ENCODE measurements at regions of chr17 and their contacts with region 1.

Region 1: GRCh38 chr17:34146440-34147043 is 108.5 kb upstream of the CCL2 start:
- DNase-seq: peak in 1 of 2 experiments; percentile 90
- H3K4me3 ChIP-seq: no peak overlapping the region
- H3K27ac ChIP-seq: no peak overlapping the region
- H3K4me1 ChIP-seq: peaks cover 0 to 4% (median 0%) of the 10 kb centered on the region in 4 experiments; a peak in 3 of 7 replicates
- H3K27me3 ChIP-seq: no peaks in the 10 kb centered on the region
- CTCF ChIP-seq: peak; percentile 93 to 99 (median 97)
- EP300 ChIP-seq: no peak
- POLR2A ChIP-seq: no peak
- RAD21 ChIP-seq: peak; percentile 93 to 96

Region 2: GRCh38 chr17:33779225-33779591 is 367.3 kb before region 1 on chr17:
- CTCF ChIA-PET with region 1: interaction called, 42 read pairs
- POLR2A ChIA-PET with region 1: no interaction called
- DNase-seq: peak; percentile 3 to 70
- H3K4me3 ChIP-seq: no peak overlapping the region
- H3K27ac ChIP-seq: no peak overlapping the region
- H3K4me1 ChIP-seq: no peaks in the 10 kb centered on the region
- H3K27me3 ChIP-seq: no peaks in the 10 kb centered on the region
- CTCF ChIP-seq: peak; percentile 55 to 81 (median 76)
- EP300 ChIP-seq: no peak
- POLR2A ChIP-seq: no peak
- RAD21 ChIP-seq: peak; percentile 89 to 90

Region 3: DNA sequence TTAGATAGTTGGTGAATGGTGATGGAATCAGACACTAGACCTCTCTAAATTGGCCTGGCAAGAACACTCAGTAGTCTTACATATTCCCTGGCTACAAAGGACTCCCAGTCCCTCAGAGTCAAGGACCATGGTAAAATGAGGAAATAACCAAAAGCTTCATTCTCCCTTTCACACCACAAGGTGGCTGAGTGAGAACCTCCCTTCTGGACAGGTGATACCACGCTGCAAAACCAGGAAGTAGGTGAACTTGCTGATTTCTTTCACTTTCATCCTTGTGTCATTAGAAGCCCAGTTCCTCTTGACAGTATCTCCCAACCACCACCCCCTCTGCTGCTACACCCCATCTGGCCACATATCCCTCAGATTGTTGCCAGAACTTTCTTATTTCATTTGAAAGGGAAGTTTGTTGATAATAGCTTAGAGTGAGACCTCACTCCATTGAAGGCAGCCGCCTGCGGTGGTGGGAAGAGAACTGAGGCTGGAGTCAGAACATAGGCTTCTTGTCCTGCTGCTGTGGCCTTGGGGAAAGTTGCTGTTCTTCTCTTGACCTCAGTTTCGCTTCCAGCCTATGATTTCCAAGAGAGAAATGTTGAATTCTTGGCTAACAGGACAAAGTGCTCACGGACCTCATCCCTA is 182.1 kb before region 1 on chr17:
- CTCF ChIA-PET with region 1: interaction called, 31 read pairs
- POLR2A ChIA-PET with region 1: no interaction called
- DNase-seq: no peak
- H3K4me3 ChIP-seq: no peak overlapping the region
- H3K27ac ChIP-seq: no peak overlapping the region
- H3K4me1 ChIP-seq: peaks cover 0 to 4% (median 1%) of the 10 kb centered on the region in 4 experiments; a peak in 2 of 7 replicates
- H3K27me3 ChIP-seq: no peaks in the 10 kb centered on the region
- CTCF ChIP-seq: peak in 2 of 3 experiments; percentile 49 to 61; a peak in 3 of 4 replicates
- EP300 ChIP-seq: no peak
- POLR2A ChIP-seq: no peak
- RAD21 ChIP-seq: peak; percentile 42 to 54; a peak in 3 of 4 replicates

Region 4: GRCh38 chr17:34099859-34100515 is 46.6 kb before region 1 on chr17:
- CTCF ChIA-PET with region 1: interaction called, 11 read pairs
- POLR2A ChIA-PET with region 1: no interaction called
- DNase-seq: no peak
- H3K4me3 ChIP-seq: no peak overlapping the region
- H3K27ac ChIP-seq: no peak overlapping the region
- H3K4me1 ChIP-seq: peaks cover 0 to 2% (median 0%) of the 10 kb centered on the region in 4 experiments; a peak in 1 of 7 replicates
- H3K27me3 ChIP-seq: no peaks in the 10 kb centered on the region
- CTCF ChIP-seq: no peak
- EP300 ChIP-seq: no peak
- POLR2A ChIP-seq: no peak
- RAD21 ChIP-seq: no peak

Region 5: DNA sequence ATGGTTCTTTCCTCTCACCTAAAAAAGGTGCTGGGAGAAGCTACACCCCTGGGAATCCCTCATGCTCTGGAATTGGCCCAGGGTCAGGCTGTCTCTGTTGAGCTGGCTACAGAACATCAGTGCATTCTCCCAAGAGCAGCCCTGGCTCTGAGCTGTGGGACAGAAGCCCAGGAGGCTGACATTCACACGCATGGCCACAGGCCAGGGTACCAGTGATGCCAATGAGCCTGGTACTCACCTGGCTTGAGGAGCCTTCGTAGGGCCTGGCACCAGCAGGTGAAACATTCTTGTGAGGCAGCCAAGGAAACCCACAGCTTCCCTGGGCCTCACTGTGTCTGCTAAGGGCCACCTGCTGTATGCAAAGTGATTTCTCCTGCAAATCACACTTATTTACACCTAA is 13.2 kb before region 1 on chr17:
- CTCF ChIA-PET with region 1: interaction called, 145 read pairs
- POLR2A ChIA-PET with region 1: interaction called, 3 read pairs
- DNase-seq: no peak
- H3K4me3 ChIP-seq: no peak overlapping the region
- H3K27ac ChIP-seq: no peak overlapping the region
- H3K4me1 ChIP-seq: peaks cover 2 to 15% (median 10%) of the 10 kb centered on the region in 4 experiments
- H3K27me3 ChIP-seq: no peaks in the 10 kb centered on the region
- CTCF ChIP-seq: no peak
- EP300 ChIP-seq: no peak
- POLR2A ChIP-seq: no peak
- RAD21 ChIP-seq: no peak

Region 6: DNA sequence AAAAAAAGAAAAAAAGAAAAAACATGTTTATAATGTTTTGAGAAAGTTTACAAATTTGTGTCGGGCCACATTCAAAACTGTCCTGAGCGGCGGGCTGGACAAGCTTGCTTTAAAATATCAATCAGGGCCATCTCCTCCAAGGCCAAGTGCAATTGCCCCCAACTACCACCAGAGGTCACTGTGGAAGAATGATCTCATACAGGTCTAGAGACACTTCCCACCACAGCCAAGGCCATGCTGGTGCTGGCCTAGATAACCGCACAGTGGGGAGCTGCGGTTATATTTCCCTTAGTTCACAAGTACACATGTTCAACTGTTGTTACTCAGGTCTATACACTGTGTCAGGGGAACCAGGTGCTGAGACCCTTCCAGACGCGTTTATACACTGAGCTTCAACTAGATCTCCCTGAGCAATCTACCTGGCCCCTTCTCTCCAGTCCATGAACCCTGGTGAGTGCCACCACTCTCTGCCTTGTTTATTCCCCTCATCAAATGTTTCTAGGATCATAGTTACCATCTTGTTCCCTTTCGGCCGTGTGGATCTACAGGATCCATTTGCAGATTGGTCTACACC is 24.8 kb after region 1 on chr17:
- CTCF ChIA-PET with region 1: interaction called, 78 read pairs
- POLR2A ChIA-PET with region 1: interaction called, 3 read pairs
- DNase-seq: peak in 1 of 2 experiments; percentile 82
- H3K4me3 ChIP-seq: no peak overlapping the region
- H3K27ac ChIP-seq: no peak overlapping the region
- H3K4me1 ChIP-seq: no peaks in the 10 kb centered on the region
- H3K27me3 ChIP-seq: no peaks in the 10 kb centered on the region
- CTCF ChIP-seq: peak; percentile 69 to 90 (median 80)
- EP300 ChIP-seq: no peak
- POLR2A ChIP-seq: no peak
- RAD21 ChIP-seq: peak; percentile 49 to 69

Region 7: DNA sequence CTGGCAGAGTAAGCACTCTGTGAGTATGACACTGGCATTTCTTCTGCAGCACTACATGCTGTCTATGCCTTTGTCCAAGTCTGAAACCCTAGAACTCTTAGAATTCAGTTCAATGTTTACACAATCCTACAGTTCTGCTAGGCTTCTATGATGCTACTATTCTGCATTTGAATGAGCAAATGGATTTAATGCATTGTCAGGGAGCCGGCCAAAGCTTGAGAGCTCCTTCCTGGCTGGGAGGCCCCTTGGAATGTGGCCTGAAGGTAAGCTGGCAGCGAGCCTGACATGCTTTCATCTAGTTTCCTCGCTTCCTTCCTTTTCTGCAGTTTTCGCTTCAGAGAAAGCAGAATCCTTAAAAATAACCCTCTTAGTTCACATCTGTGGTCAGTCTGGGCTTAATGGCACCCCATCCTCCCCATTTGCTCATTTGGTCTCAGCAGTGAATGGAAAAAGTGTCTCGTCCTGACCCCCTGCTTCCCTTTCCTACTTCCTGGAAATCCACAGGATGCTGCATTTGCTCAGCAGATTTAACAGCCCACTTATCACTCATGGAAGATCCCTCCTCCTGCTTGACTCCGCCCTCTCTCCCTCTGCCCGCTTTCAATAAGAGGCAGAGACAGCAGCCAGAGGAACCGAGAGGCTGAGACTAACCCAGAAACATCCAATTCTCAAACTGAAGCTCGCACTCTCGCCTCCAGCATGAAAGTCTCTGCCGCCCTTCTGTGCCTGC is 108.3 kb after region 1 on chr17 and contains the start of gene CCL2:
- CTCF ChIA-PET with region 1: no interaction called
- POLR2A ChIA-PET with region 1: no interaction called
- DNase-seq: peak; percentile 46 to 56
- H3K4me3 ChIP-seq: peak within 1 kb of the TSS; percentile 25 to 53 (median 44); a peak in 7 of 8 replicates
- H3K27ac ChIP-seq: peak within 1 kb of the TSS; percentile 32; the same call in 1 of the 2 replicates
- H3K4me1 ChIP-seq: peaks cover 4 to 11% (median 7%) of the 10 kb centered on the region in 4 experiments; a peak in 6 of 7 replicates
- H3K27me3 ChIP-seq: no peaks in the 10 kb centered on the region
- CTCF ChIP-seq: no peak
- EP300 ChIP-seq: no peak
- POLR2A ChIP-seq: no peak
- RAD21 ChIP-seq: no peak
- total RNA-seq, gene CCL2: 3.1 and 3.7 TPM in 2 replicates